Activated CD4-positive, alpha-beta T cell treated with anti-CD3 and anti-CD28 coated beads, Interleukin-2, amount 10 ng/mL, durations not matched to agents 7 days and 5 days (primary cell): ENCODE measurements at regions of chr1 and their contacts with region 1.

Region 1: GRCh38 chr1:159077120-159077961 is 775 bp upstream of the AIM2 start:
- DNase-seq: peak; percentile 94
- H3K4me3 Mint-ChIP-seq: peak overlapping the region; percentile 68
- H3K27ac Mint-ChIP-seq: peak overlapping the region; percentile 94
- H3K4me1 Mint-ChIP-seq: peaks cover 42% of the 10 kb centered on the region
- H3K27me3 Mint-ChIP-seq: peaks cover 4% of the 10 kb centered on the region

Region 2: DNA sequence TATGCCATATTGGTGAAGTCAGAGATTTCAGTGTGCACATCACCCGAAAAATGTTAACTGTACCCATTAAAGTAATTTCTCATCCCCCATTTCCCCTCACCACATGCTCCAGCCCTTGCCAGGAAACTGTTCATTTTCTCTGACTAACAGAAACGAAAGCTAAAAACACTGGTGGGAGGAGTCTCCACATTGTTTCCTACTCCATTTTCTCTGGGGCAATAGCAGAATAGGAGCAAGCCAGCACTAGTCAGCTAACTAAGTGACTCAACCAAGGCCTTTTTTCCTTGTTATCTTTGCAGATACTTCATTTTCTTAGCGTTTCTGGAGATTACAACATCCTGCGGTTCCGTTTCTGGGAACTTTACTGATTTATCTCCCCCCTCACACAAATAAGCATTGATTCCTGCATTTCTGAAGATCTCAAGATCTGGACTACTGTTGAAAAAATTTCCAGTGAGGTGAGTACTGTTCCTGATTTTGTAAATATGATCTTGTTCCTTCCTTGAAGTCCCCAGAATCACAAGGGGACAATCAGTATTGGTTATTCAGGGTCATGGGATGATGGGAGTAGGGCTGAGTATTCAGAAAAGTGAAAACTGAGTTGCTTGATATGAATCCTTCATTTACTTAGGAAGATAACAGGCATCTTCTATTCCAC is 67.5 kb before region 1 on chr1 and contains the start of gene IFI16:
- CTCF ChIA-PET with region 1: interaction called, 7 read pairs
- POLR2A ChIA-PET with region 1: interaction called, 35 read pairs
- DNase-seq: peak; percentile 84
- H3K4me3 Mint-ChIP-seq: peak within 1 kb of the TSS; percentile 99
- H3K27ac Mint-ChIP-seq: peak within 1 kb of the TSS; percentile 100
- H3K4me1 Mint-ChIP-seq: peaks cover 54% of the 10 kb centered on the region
- H3K27me3 Mint-ChIP-seq: no peaks in the 10 kb centered on the region
- total RNA-seq, gene IFI16: 300 to 342 TPM

Region 3: DNA sequence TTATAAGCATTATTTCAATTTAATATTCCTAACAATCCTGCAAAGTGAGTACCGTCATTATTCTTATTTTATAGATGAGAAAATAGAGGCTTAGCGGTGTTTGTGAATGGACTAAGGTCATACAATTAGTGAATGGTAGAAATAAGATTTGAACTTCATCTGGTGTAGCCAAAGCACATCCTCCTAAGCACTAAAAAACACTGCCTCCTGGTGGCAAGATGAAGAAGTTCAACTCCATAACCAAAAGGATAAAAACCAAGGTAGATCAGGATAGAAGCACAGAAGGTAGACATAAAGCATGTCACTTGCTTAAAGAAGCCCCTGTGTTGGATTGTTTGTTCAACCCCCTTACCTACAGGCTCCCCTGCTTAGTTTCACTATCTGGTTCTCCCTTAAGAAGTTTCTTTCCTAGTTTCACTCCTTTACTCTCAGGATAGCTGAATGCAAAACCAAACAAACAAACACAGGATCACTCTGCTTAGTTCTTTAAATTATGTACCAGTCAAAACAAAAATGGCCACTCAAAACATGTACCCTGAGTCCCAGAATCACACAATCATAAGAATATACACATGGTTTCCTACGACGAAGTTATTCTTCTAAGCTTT is 11.9 kb after region 1 on chr1:
- CTCF ChIA-PET with region 1: interaction called, 26 read pairs
- POLR2A ChIA-PET with region 1: interaction called, 9 read pairs
- DNase-seq: peak; percentile 29
- H3K4me3 Mint-ChIP-seq: no peak overlapping the region
- H3K27ac Mint-ChIP-seq: no peak overlapping the region
- H3K4me1 Mint-ChIP-seq: peaks cover 44% of the 10 kb centered on the region
- H3K27me3 Mint-ChIP-seq: no peaks in the 10 kb centered on the region